ENCODE measurements at regions of chr17 and their contacts with region 1.

Region 1: GRCh38 chr17:57838857-57839570 is 10.8 kb downstream of the MRPS23 start:
- DNase-seq: no peak
- ATAC-seq: peak in 1 of 2 donors; percentile 2
- H3K4me3 ChIP-seq: no peak overlapping the region
- H3K27ac ChIP-seq: peak overlapping the region; percentile 71 to 92 (median 88)
- H3K4me1 ChIP-seq: peaks cover 46 to 58% of the 10 kb centered on the region in 2 donors
- H3K27me3 ChIP-seq: no peaks in the 10 kb centered on the region
- CTCF ChIP-seq: no peak
- POLR2A ChIP-seq: no peak

Region 2: DNA sequence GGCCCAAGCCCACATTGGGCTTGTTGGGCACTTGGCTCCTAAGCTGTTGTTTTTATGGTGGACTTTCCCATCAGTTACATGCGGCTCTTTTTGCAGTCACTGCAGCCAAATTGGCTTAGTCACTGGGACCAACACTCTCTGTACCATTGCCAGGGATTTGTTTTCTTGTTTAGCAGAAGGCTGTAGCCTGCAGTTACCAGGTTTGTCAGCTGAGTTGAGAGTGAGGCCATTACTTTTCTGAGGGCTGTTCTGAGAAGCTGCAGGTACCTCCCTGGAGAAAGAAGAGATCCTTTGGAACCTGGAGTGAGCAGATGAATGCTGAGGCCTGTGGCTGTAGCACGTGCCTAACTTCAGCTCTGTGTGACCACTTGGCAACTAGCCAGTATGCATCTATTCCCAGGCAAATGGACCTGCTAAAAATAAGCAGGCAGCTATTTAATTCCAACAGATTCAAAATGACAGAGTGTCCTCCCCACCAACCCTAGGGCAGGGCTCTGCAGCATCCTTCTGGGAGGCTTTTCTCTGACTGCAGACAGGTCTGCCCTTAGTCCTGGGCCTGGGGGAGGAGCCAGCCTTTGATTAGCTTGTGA is 741.1 kb before region 1 on chr17:
- in situ Hi-C with region 1: no loop called
- intact Hi-C with region 1: loop called (anchors 5 kb)
- DNase-seq: peak; percentile 75 to 82
- ATAC-seq: peak; percentile 74 to 87
- H3K4me3 ChIP-seq: no peak overlapping the region
- H3K27ac ChIP-seq: peak overlapping the region; percentile 91 to 99 (median 94)
- H3K4me1 ChIP-seq: peaks cover 92 to 98% of the 10 kb centered on the region in 2 donors
- H3K27me3 ChIP-seq: no peaks in the 10 kb centered on the region
- CTCF ChIP-seq: no peak
- POLR2A ChIP-seq: peak; percentile 37 to 59

Measured in gastrocnemius medialis (tissue), 4 donors.